ENCODE measurements at regions of chr15 and their contacts with region 1.

Region 1: DNA sequence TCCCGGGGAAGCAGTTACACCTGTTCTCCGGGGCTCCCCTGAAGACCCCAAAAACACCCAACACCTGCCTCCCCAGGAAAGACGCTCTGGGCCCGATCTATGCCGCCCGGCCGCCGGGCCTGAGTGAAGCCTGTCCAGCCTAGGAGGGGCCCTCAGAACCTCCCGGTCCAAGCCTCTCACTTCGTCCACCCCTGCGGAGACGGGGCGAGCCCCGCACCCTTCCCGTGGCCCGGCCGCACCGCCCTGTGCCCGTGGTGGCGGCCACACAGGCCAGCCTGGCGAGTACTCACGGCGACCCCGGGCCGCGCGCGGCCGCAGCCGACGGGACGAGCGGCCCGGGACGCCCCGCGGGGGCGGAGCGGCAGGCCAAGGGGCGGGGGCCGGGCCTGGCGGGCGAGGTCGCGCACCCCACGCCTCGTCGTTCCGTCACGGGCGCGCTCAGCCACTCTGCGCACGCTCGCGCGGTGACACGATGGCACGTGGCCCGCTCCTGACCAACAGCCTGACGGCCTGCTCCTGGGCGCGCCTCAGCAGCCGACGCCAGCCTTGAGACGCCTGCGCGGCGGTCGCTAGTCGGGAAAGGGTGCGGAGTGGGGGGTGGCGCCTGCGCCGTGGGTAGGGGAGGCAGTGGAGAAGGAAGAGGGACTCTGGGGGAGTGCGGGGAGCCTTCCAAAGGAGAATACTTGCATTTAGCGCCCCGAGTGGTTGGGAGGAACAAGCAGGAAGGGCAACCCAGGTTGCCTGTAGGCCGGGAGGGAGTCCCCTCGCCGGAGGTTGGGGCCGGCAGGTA is at the start of gene PARP6:
- DNase-seq: peak; percentile 100
- ATAC-seq: peak; percentile 99
- H3K4me3 ChIP-seq: peak within 1 kb of the TSS; percentile 93
- H3K27ac ChIP-seq: peak within 1 kb of the TSS; percentile 92
- H3K4me1 ChIP-seq: peaks cover 23% of the 10 kb centered on the region
- H3K27me3 ChIP-seq: no peaks in the 10 kb centered on the region
- CTCF ChIP-seq: peak; percentile 62
- total RNA-seq, gene PARP6: 46.1 to 83.2 (median 65.5) TPM

Region 2: DNA sequence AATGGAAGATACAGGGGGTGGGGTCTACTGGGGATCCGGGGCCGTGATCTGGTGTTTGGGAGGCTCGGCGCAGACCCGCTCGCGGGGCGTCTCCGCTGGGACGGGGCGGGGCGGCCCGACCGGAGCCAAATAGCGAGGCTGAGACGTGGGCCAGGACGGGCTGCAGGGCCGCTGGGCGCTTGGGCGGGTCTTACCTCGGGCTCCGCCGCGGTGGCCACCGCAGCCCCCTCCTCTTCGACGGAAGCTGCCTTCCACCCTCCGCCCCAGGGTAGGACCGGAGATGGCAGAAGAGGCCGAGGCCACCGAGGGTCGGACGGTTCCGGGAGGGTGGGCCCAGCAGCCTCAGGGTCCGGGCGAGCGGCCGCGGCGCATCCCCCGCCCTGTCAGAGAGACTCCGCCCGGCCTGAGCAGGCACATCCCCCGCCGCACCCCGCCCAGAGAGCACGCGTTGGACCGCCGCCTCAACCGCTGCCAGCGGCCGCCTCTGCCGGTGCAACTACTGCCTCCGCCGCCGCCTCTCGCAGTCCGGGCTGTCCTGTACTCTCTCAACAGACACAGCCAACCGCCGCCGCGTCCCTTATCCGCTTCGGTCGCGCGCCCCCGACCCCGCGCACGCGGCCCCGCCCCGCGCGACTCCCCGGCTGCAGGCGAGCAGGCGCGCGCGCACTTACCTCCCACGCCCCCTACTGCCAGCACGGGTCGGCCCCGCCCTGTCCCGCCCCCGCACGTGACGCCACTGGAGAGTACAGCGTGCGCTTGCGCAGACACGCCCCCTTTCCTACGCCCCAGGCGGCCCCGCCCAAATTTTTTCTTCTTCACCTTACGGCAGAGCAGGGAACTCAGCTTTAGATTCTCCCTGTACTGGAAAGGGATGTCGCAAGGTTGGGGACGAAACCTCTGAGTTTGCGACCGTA is 154.7 kb before region 1 on chr15 and contains the start of gene MYO9A:
- intact Hi-C with region 1: loop called in 1 of 2 experiments (anchors 5 kb)
- DNase-seq: peak; percentile 98 to 99
- ATAC-seq: peak; percentile 88 to 93 (median 92)
- H3K4me3 ChIP-seq: peak within 1 kb of the TSS; percentile 87
- H3K27ac ChIP-seq: peak within 1 kb of the TSS; percentile 95
- H3K4me1 ChIP-seq: peaks cover 39% of the 10 kb centered on the region
- H3K27me3 ChIP-seq: no peaks in the 10 kb centered on the region
- CTCF ChIP-seq: peak; percentile 13
- total RNA-seq, gene MYO9A: 23.0 to 28.4 (median 25.9) TPM

Region 3: GRCh38 chr15:72199711-72200212 is 72.6 kb before region 1 on chr15:
- intact Hi-C with region 1: loop called in 1 of 2 experiments (anchors 5 kb)
- DNase-seq: peak; percentile 80 to 88
- ATAC-seq: peak; percentile 61 to 75 (median 68)
- H3K4me3 ChIP-seq: no peak overlapping the region
- H3K27ac ChIP-seq: peak overlapping the region; percentile 91
- H3K4me1 ChIP-seq: peaks cover 49% of the 10 kb centered on the region
- H3K27me3 ChIP-seq: no peaks in the 10 kb centered on the region
- CTCF ChIP-seq: peak; percentile 93

Region 4: GRCh38 chr15:72231066-72231846 is 41.2 kb before region 1 on chr15 and contains the start of gene PKM:
- intact Hi-C with region 1: loop called (anchors 2 to 5 kb)
- DNase-seq: peak; percentile 97 to 98
- ATAC-seq: peak; percentile 81 to 85 (median 84)
- H3K4me3 ChIP-seq: peak within 1 kb of the TSS; percentile 99
- H3K27ac ChIP-seq: peak within 1 kb of the TSS; percentile 99
- H3K4me1 ChIP-seq: peaks cover 39% of the 10 kb centered on the region
- H3K27me3 ChIP-seq: no peaks in the 10 kb centered on the region
- CTCF ChIP-seq: no peak
- total RNA-seq, gene PKM: 513 to 1,170 (median 767) TPM

Region 5: GRCh38 chr15:72473614-72474465 is 201.4 kb after region 1 on chr15 and contains the start of gene ARIH1:
- intact Hi-C with region 1: loop called in 1 of 2 experiments (anchors 5 kb)
- DNase-seq: peak; percentile 97 to 99
- ATAC-seq: peak; percentile 95 to 97 (median 96)
- H3K4me3 ChIP-seq: peak within 1 kb of the TSS; percentile 90
- H3K27ac ChIP-seq: peak within 1 kb of the TSS; percentile 100
- H3K4me1 ChIP-seq: peaks cover 30% of the 10 kb centered on the region
- H3K27me3 ChIP-seq: no peaks in the 10 kb centered on the region
- CTCF ChIP-seq: peak; percentile 34
- total RNA-seq, gene ARIH1: 181 to 253 (median 204) TPM

Measured in psoas muscle (tissue), 8 donors.